ENCODE measurements at regions of chr19 and their contacts with region 1.

Region 1: DNA sequence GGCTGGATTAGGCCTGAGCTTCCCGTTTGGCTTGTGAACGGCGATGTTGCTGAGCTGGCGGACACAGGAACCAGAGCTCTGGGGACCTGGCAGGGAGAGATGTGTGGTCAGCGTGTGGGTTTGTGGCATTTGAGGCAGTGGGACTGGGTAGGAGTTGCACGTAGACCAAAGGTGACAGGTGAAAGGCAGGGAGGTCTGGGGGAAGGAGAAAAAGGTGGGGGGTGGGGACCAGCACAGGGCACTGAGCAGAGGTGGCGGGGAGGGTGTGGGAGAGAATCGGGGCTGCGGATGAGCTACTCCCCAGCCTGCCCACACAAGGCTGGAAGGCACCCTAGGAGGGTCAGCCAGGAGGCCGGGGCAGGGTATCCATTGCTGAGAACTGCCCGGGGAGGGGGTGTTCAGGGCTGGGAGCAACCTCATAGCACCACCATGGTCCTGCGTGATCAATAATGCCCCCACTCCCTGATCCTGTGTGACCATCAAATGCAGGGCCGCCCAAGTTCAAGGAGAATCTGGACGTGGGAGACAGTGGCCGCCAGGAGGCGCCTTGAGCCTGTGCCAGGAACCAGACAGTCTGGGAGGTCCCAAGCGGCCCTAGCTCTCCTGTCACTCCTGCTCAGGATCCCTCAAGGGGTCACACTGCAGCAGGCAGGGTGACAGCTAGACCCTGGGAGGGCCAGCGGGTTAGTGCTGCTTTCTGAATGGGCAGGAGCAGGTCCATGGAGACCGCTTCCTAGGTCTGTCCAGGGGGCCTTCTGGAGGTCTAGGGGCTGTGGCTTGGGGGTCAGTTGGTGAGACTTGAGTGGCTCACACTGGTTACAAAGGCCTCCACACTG is 12.8 kb upstream of the SELENOW start:
- DNase-seq: no peak
- ATAC-seq: peak; percentile 88
- H3K4me3 ChIP-seq: no peak overlapping the region
- H3K27ac ChIP-seq: no peak overlapping the region
- H3K4me1 ChIP-seq: peaks cover 3 to 7% of the 10 kb centered on the region in 2 experiments; a peak in 1 of 4 replicates
- H3K27me3 ChIP-seq: no peaks in the 10 kb centered on the region
- CTCF ChIP-seq: peak; percentile 71 to 91 (median 89)
- POLR2A ChIP-seq: no peak
- RAD21 ChIP-seq: peak; percentile 82

Region 2: DNA sequence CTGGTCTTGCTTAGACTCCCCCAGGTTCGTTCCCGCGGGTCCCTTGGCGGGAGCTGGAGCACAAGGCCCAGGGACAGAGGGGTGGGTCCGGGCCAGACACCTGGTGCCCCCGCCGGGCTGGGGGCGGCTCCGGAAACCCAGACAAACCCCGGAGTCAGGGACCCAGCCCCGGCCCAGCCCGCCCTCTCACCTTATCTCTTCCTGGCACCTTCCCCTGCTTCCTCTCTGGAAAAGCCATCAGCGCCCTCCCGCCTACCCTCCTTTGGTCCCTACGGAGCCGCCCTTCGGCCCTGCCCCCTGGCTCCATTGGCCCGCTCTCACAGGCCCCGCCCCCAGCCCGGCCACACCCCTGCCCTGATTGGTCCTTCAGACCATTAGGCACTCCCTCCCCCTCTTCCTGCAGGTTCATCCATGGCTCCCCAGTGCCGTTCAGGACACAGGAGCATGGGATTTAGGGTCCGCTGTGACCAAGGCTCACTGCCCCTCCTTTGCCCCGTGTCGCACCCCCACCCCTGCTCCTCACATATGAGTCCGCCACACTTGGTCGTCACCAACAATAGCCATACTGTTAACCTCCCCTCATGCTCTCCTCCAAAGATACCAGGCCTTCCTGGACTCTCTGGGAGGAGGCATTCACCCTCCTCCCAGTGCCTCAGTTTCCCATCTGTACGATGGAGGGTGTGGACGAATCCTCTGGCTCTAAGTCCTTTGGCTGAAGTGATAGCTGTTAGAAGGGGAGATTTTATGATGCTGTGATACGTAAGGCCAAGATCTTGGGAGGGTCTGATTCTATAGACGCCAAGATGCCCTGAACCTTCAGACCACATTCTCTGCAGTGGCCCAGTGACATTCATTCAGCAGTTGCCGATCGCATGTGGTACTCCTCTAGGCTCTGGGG is 35.5 kb before region 1 on chr19:
- CTCF ChIA-PET with region 1: no interaction called
- POLR2A ChIA-PET with region 1: no interaction called
- RAD21 ChIA-PET with region 1: no interaction called
- intact Hi-C with region 1: no loop called
- DNase-seq: no peak
- ATAC-seq: peak; percentile 87
- H3K4me3 ChIP-seq: peak overlapping the region; percentile 49 to 58
- H3K27ac ChIP-seq: peak overlapping the region; percentile 98
- H3K4me1 ChIP-seq: peaks cover 35 to 57% of the 10 kb centered on the region in 2 experiments
- H3K27me3 ChIP-seq: no peaks in the 10 kb centered on the region
- CTCF ChIP-seq: no peak
- POLR2A ChIP-seq: no peak
- RAD21 ChIP-seq: no peak

Region 3: GRCh38 chr19:47790398-47790814 is 24.7 kb after region 1 on chr19:
- CTCF ChIA-PET with region 1: interaction called, 7 read pairs
- POLR2A ChIA-PET with region 1: no interaction called
- RAD21 ChIA-PET with region 1: no interaction called
- intact Hi-C with region 1: loop called (anchors 1 kb)
- DNase-seq: peak; percentile 88
- ATAC-seq: peak; percentile 88
- H3K4me3 ChIP-seq: peak overlapping the region; percentile 21 to 23
- H3K27ac ChIP-seq: peak overlapping the region; percentile 81
- H3K4me1 ChIP-seq: peaks cover 14 to 25% of the 10 kb centered on the region in 2 experiments
- H3K27me3 ChIP-seq: no peaks in the 10 kb centered on the region
- CTCF ChIP-seq: peak; percentile 87 to 98 (median 97)
- POLR2A ChIP-seq: no peak
- RAD21 ChIP-seq: peak; percentile 64